AG04450 (cell line): ENCODE measurements at regions of chr2 and their contacts with region 1.

Region 1: DNA sequence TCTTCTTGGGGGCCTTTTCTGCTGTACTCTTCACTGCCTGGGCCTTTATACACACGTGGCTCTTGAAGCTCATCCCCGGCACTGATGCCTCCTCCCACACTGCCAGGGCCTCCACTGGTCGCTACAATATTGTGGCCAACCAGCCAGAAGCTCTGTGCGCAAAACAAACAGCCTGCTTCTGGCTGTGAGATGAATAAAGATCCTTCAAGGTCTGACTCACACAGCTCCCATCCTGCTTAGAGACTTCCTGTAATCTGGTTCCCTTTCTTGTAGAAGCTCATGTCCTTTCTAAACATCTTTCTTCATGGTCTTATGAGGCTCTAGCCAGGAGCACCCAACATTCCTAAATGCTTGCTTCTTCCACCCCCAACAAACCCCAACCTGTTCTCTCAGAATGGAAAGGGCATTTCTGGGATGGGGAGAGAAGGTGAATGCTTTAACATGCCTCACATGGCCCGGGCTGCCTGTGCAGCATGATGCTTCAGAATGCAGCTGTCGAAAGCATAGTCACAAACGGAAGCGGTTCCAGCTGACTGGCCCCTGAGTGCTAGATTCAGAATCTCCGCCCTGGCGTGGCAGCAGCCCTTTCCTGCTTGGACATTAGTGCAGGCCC is 24.6 kb downstream of the NRP2 start:
- DNase-seq: peak; percentile 80
- H3K4me3 ChIP-seq: peak overlapping the region; percentile 7; the same call in 1 of the 2 replicates
- H3K27ac ChIP-seq: peak overlapping the region; percentile 89
- H3K27me3 ChIP-seq: no peaks in the 10 kb centered on the region
- CTCF ChIP-seq: no peak

Region 2: GRCh38 chr2:205696331-205696923 is 10.4 kb before region 1 on chr2:
- CTCF ChIA-PET with region 1: no interaction called
- POLR2A ChIA-PET with region 1: interaction called, 17 read pairs
- DNase-seq: no peak
- H3K4me3 ChIP-seq: no peak overlapping the region
- H3K27ac ChIP-seq: peak overlapping the region; percentile 72
- H3K27me3 ChIP-seq: no peaks in the 10 kb centered on the region
- CTCF ChIP-seq: peak; percentile 24; the same call in 1 of the 2 replicates

Region 3: DNA sequence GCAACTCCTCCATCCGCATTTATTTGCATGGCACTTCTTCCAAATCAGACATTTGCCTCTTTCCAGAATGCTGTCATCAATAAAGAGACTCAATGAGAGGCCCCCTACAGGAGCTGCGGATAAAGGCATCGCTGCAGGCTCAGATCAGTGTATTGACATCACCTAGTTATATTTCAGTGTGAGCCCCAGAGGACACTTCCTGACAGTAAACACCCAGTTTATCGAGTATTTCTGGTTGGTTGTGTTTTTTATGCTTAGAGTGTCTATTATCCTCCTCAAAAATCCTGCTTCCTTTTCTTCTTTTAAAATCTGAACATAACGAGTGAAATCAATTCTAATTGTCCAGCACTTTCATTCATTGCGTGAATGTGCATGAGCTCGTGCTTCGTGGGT is 14.2 kb after region 1 on chr2:
- CTCF ChIA-PET with region 1: interaction called, 3 read pairs
- POLR2A ChIA-PET with region 1: interaction called, 10 read pairs
- DNase-seq: no peak
- H3K4me3 ChIP-seq: no peak overlapping the region
- H3K27ac ChIP-seq: no peak overlapping the region
- H3K27me3 ChIP-seq: no peaks in the 10 kb centered on the region
- CTCF ChIP-seq: peak; percentile 47

Region 4: DNA sequence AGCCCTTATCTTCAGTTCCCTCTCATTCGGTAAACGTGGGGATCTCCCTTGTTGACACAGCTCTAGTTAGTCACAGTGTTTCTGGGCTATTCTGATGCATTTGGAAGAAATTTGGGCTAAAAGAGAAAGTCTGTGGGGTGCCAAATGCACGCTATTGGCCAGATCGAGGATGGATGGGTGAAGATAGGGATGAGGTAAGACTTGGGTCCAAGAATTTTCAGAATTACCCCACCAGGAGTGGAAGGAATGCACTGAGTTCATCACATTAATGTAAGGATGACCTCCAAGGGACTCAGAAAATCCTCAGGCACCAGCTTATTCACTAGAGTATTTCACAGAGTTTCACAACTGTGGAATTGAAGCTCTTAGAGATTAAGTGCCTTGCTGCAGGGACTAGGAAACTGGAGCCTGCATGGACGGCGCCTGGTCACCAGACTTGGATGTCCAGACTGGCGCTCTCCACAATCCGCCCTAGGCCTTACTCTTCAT is 24.8 kb after region 1 on chr2:
- CTCF ChIA-PET with region 1: interaction called, 3 read pairs
- POLR2A ChIA-PET with region 1: interaction called, 17 read pairs
- DNase-seq: peak; percentile 86
- H3K4me3 ChIP-seq: no peak overlapping the region
- H3K27ac ChIP-seq: peak overlapping the region; percentile 89
- H3K27me3 ChIP-seq: no peaks in the 10 kb centered on the region
- CTCF ChIP-seq: no peak

Region 5: DNA sequence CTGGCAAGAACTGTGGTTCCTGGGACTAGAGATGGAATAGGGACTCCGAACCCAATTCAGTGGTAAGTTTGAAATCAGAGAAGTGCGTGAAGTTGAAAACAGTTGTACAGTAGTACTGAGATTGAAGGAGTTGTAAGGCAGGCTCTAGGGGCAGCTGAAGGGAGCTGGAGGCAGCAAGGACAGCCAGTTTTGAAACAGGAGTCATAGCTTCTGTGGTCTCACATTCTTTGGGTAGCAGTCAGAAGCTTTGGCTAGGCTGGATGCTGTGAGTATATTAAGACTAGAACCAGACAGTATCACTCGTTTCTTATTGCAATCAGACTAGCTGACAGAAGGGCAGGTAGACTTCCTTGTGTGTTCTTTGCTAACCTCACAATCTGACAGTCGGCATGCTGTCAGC is 672.0 kb after region 1 on chr2:
- CTCF ChIA-PET with region 1: no interaction called
- POLR2A ChIA-PET with region 1: no interaction called
- DNase-seq: no peak
- H3K4me3 ChIP-seq: no peak overlapping the region
- H3K27ac ChIP-seq: no peak overlapping the region
- H3K27me3 ChIP-seq: no peaks in the 10 kb centered on the region
- CTCF ChIP-seq: no peak